ENCODE measurements at regions of chr11 and their contacts with region 1.

Region 1: GRCh38 chr11:304915-305843 is 2.4 kb upstream of the IFITM2 start:
- DNase-seq: peak in 1 of 2 donors; percentile 85
- H3K4me3 ChIP-seq: no peak overlapping the region
- H3K27ac ChIP-seq: peak overlapping the region in 1 of 2 donors; percentile 86
- H3K4me1 ChIP-seq: peaks cover 7 to 35% of the 10 kb centered on the region in 2 donors
- H3K27me3 ChIP-seq: no peaks in the 10 kb centered on the region
- CTCF ChIP-seq: peak; percentile 58 to 65 (median 64)

Region 2: GRCh38 chr11:207208-207862 is 97.8 kb before region 1 on chr11 and contains the starts of genes BET1L and RIC8A:
- intact Hi-C with region 1: loop called (anchors 5 kb)
- DNase-seq: peak; percentile 95 to 99
- H3K4me3 ChIP-seq: peak within 1 kb of the TSS; percentile 88 to 99
- H3K27ac ChIP-seq: peak within 1 kb of the TSS; percentile 99
- H3K4me1 ChIP-seq: peaks cover 17 to 47% of the 10 kb centered on the region in 2 donors
- H3K27me3 ChIP-seq: no peaks in the 10 kb centered on the region
- CTCF ChIP-seq: no peak
- total RNA-seq, gene BET1L: 42.3 TPM
- total RNA-seq, gene RIC8A: 102 TPM

Measured in ascending aorta (tissue), 2 donors.